Vagina (tissue), 2 donors: ENCODE measurements at regions of chr1 and their contacts with region 1.

Region 1: DNA sequence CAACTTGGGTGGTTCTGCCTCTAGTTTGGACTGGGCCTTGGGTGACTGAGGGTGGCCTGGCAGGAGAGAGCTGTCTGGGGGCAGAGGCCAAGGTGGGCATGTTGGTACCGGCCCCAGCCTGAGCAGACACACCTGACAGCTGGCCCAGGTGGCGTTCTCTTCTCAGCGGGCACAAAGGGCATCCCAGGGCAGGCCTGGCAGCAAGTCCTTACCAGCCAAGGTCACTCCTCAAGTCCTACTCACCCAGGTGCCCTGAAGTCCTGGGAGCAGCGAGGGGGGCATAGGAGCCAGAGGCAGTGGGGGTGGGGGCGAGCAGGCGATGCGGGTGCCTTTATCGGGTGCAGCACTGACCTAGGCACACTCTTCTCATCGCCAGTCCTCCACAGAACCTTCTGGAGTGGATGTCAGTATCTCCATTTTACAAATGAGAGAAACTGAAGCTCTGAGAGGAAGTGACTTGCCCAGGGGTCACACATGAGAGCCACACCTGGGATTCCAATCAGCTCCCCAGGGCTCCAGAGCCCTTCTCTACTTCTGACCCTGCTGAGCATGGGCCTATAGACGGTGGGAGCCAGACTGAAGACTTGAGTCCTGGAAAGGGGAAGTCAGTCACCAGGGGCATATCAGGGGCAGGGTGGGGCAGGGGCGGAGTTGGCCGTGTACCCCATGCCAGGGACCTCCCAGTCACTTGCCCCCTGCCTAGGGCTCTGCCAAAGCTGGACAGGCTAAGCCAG is 587 bp upstream of the SLC25A34 start:
- DNase-seq: no peak
- H3K4me3 ChIP-seq: no peak overlapping the region
- H3K27ac ChIP-seq: peak overlapping the region; percentile 40
- H3K4me1 ChIP-seq: peaks cover 29% of the 10 kb centered on the region
- H3K27me3 ChIP-seq: no peaks in the 10 kb centered on the region
- CTCF ChIP-seq: no peak
- POLR2A ChIP-seq: no peak

Region 2: GRCh38 chr1:15678578-15678977 is 56.9 kb before region 1 on chr1:
- intact Hi-C with region 1: loop called (anchors 2 kb)
- DNase-seq: no peak
- H3K4me3 ChIP-seq: no peak overlapping the region
- H3K27ac ChIP-seq: no peak overlapping the region
- H3K4me1 ChIP-seq: peaks cover 32% of the 10 kb centered on the region
- H3K27me3 ChIP-seq: no peaks in the 10 kb centered on the region
- CTCF ChIP-seq: no peak
- POLR2A ChIP-seq: no peak